ENCODE measurements at regions of chr3 and their contacts with region 1.

Region 1: GRCh38 chr3:12070098-12070497 is 65.9 kb downstream of the SYN2 start:
- DNase-seq: no peak
- H3K4me3 Mint-ChIP-seq: no peak overlapping the region
- H3K27ac Mint-ChIP-seq: no peak overlapping the region
- H3K4me1 Mint-ChIP-seq: no peaks in the 10 kb centered on the region
- H3K27me3 Mint-ChIP-seq: no peaks in the 10 kb centered on the region

Region 2: DNA sequence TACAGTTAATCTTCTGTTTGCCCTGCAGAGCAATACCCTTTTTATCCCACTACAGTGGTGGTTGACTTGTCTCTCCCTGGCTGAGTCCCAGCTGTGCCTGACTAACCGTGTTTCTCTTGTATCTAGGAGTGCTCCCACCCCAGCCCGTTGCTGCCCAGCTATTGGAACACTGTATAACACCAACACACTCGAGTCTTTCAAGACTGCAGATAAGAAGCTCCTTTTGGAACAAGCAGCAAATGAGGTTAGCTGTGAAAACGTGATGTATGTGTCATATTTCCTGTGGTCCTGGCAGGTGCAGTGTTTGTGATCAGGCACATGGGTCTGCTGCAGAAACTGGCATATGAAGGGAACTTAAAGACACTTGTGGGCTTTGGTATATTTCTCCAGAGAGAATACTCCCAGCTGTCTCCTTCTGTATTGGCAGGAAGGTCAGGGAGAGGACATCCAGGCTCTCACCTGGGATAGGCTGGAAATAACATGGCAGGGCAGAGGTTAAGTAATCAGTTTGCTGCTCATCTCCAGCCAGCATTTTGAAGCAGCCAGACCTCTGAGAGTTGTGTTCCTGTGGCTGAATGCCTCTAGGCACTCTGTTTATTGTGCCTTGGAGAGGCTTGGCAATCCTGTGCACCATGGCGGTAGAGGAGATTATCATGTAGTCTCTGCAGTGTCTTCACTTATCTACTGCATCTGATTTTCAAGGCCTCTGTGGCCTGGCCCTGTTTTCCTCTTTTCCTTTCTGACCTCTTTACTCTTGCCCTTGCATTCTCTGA is 763.1 kb before region 1 on chr3:
- CTCF ChIA-PET with region 1: no interaction called
- POLR2A ChIA-PET with region 1: no interaction called
- intact Hi-C with region 1: no loop called
- DNase-seq: peak; percentile 48
- H3K4me3 Mint-ChIP-seq: no peak overlapping the region
- H3K27ac Mint-ChIP-seq: no peak overlapping the region
- H3K4me1 Mint-ChIP-seq: peaks cover 23% of the 10 kb centered on the region
- H3K27me3 Mint-ChIP-seq: no peaks in the 10 kb centered on the region

Region 3: GRCh38 chr3:11774294-11774877 is 295.7 kb before region 1 on chr3:
- CTCF ChIA-PET with region 1: no interaction called
- POLR2A ChIA-PET with region 1: no interaction called
- intact Hi-C with region 1: no loop called
- DNase-seq: no peak
- H3K4me3 Mint-ChIP-seq: no peak overlapping the region
- H3K27ac Mint-ChIP-seq: no peak overlapping the region
- H3K4me1 Mint-ChIP-seq: peaks cover 20% of the 10 kb centered on the region
- H3K27me3 Mint-ChIP-seq: no peaks in the 10 kb centered on the region

Region 4: DNA sequence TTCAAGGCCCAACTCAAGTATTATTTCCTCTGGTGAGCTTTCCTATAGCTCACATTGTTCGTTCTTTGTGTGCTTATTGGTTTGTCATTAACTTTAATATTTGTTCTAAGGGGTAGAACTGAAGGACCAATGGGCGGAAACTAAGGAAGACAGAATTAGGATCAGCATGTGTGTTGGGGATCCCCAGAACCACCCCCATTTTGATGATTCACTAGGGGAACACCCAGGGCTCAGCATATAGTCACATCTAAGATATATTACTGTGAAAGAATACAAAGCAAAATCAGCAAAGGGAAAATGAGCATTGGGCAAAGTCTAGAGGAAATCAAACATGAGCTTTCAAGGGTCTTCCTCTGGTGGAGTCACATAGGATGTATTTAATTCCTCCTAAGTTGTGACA is 11.7 kb after region 1 on chr3:
- CTCF ChIA-PET with region 1: no interaction called
- POLR2A ChIA-PET with region 1: no interaction called
- intact Hi-C with region 1: loop called (anchors 1 kb)
- DNase-seq: no peak
- H3K4me3 Mint-ChIP-seq: no peak overlapping the region
- H3K27ac Mint-ChIP-seq: no peak overlapping the region
- H3K4me1 Mint-ChIP-seq: no peaks in the 10 kb centered on the region
- H3K27me3 Mint-ChIP-seq: peaks cover 34% of the 10 kb centered on the region